ENCODE measurements at regions of chr11 and their contacts with region 1.

Region 1: GRCh38 chr11:121591405-121592033 is 138.8 kb upstream of the SORL1-AS1 start:
- DNase-seq: peak; percentile 79
- H3K4me3 ChIP-seq: no peak overlapping the region
- H3K27ac ChIP-seq: no peak overlapping the region
- H3K4me1 ChIP-seq: peaks cover 4% of the 10 kb centered on the region
- H3K27me3 ChIP-seq: peaks cover 12 to 15% of the 10 kb centered on the region in 2 experiments
- CTCF ChIP-seq: peak; percentile 76
- POLR2A ChIP-seq: no peak

Region 2: DNA sequence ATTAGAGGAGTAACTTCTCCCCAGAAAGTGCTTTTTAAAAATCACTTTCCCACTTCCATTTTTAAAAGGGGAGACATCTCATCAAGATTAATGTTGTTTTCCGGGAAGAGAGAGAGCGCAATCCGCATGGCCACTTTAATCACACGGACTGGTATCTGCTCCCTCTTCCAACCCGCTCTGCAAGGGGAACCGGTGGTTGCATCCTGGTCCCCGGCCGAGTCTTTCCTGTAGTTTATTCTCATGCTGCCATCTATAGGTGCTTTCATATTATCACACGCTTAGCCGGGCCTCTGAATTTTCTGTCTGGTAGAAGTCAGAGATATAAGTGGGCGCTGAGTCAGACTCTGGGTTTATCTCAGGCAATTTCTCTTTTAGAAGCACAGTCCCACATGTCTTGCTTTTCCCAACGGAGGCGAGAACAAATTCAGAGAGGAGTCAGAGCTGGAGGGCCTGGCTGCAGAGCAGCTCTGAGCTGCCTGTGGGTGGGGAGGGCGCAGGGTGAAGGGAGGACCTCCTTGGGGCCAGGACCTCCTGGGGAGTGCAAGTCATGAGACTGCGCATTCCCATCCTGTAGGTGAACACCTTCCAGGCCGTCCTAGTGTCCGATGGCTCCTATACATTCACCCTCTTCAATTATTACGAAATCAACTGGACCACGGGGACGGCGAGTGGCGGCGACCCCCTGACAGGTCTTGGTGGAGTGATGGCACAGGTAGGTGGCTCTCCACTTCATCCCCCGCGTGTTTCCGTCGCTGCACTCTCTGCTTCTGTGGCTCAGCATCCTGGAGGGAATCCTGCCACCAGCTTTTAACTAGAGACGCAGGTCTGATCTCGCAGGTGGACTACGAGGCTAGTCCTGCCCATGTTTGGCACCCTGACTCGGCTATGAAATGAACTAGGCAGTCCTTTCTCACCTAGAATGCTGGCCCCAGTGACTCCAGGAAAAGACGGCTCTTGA is 478.7 kb before region 1 on chr11:
- CTCF ChIA-PET with region 1: no interaction called
- POLR2A ChIA-PET with region 1: no interaction called
- dilution Hi-C with region 1: no loop called
- intact Hi-C with region 1: loop called (anchors 5 kb)
- DNase-seq: peak; percentile 54
- H3K4me3 ChIP-seq: no peak overlapping the region
- H3K27ac ChIP-seq: no peak overlapping the region
- H3K4me1 ChIP-seq: peaks cover 8% of the 10 kb centered on the region
- H3K27me3 ChIP-seq: peaks cover 0 to 7% of the 10 kb centered on the region in 2 experiments
- CTCF ChIP-seq: peak; percentile 39 to 45
- POLR2A ChIP-seq: no peak

Region 3: DNA sequence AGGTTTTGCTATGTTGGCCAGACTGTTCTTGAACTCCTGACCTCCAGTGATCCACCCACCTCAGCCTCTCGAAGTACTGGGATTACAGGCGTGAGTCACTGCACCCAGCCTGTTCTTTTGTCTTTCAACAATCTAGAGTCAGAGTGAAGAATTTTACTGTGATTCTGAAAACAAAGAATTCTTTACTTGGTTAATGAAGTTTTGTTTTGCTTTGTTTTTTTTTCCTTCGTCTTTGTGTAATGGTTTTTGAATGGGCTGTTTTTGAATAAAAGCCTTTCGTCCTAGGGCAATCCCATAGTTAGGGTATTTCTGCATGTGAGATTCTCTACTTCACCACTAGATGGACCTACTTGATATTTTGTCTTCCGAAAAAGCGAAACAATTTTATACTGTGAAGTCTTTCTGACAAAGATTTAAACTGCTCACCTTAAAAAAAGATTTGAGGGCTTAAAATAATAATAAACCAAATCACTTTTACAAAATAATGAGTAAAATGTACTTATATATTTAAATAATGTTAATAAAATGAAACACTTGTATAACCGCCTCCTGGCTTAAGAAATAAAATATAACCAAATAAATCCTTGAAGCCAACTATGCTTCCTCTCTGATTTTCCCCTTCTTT is 342.4 kb before region 1 on chr11:
- CTCF ChIA-PET with region 1: interaction called, 33 read pairs
- POLR2A ChIA-PET with region 1: no interaction called
- dilution Hi-C with region 1: no loop called
- intact Hi-C with region 1: loop called (anchors 1 kb)
- DNase-seq: peak; percentile 54
- H3K4me3 ChIP-seq: no peak overlapping the region
- H3K27ac ChIP-seq: no peak overlapping the region
- H3K4me1 ChIP-seq: no peaks in the 10 kb centered on the region
- H3K27me3 ChIP-seq: peaks cover 0 to 2% of the 10 kb centered on the region in 2 experiments
- CTCF ChIP-seq: peak; percentile 45 to 58
- POLR2A ChIP-seq: no peak

Region 4: DNA sequence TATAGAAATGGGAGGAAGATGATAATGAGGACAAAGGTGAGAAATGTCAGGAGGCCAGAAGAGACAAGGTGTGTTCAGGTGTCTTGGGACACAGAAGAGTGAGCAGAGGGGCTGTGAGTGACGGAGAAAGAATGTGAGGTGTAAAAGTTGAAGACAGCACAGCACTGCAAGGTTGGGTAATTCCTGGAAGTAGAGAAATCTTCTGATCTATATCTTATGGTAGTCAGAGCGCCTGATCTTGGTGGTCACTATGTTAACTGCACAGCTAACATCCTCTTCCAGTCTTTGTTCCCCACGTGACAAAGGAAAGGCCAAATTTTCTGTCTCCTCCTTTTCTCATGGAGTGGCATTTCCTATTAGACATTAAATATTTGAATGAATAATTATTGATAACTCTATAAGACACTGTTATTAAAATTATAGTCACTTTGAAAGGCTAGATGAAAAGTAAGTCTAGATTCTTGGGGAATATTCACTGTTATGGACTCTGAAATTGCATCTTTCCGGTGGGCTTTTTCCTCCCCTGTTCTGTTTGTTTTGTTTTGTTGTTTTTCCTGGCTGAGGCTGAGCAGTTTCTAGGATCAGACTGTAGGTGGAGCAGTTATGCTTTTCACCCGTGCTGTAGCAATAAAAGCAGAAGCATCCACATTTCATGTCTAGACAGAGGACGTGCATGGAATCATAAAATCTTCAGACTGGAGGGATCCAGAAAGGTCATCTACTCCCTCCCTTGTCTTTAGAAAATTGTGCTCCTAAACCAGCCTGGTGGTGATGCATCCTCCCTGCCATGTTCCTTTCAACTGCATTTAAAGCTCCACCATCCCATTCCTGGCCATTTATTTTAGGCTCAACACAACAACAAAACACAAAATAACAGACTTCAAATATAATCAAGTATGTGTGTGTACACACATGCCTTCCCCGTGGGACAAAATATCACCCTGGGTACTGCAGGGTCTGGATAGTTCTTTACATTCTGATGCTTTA is 272.4 kb before region 1 on chr11:
- CTCF ChIA-PET with region 1: interaction called, 82 read pairs
- POLR2A ChIA-PET with region 1: no interaction called
- dilution Hi-C with region 1: no loop called
- intact Hi-C with region 1: loop called (anchors 1 kb)
- DNase-seq: peak; percentile 44
- H3K4me3 ChIP-seq: no peak overlapping the region
- H3K27ac ChIP-seq: no peak overlapping the region
- H3K4me1 ChIP-seq: no peaks in the 10 kb centered on the region
- H3K27me3 ChIP-seq: peaks cover 10 to 21% of the 10 kb centered on the region in 2 experiments
- CTCF ChIP-seq: peak; percentile 60
- POLR2A ChIP-seq: no peak

Region 5: DNA sequence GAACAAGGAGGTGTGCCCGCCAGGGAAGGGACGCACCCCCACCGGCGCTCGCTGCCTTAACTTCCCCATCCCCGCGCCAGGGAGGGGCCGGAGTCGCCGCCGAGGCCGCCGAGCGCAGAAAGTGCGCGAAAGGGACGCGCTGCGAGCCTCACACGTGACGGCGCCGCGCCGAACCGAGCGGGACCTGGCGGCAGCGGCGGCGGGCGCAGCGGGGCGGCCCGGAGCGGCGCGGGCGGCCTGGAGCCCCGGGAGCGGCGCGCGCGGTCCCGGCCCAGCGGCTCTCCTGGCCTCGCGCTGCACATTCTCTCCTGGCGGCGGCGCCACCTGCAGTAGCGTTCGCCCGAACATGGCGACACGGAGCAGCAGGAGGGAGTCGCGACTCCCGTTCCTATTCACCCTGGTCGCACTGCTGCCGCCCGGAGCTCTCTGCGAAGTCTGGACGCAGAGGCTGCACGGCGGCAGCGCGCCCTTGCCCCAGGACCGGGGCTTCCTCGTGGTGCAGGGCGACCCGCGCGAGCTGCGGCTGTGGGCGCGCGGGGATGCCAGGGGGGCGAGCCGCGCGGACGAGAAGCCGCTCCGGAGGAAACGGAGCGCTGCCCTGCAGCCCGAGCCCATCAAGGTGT is 139.4 kb before region 1 on chr11 and contains the start of gene SORL1:
- CTCF ChIA-PET with region 1: interaction called, 75 read pairs
- POLR2A ChIA-PET with region 1: no interaction called
- dilution Hi-C with region 1: no loop called
- intact Hi-C with region 1: loop called (anchors 1 kb)
- DNase-seq: peak; percentile 26
- H3K4me3 ChIP-seq: peak within 1 kb of the TSS in 2 of 3 experiments; percentile 1 to 38
- H3K27ac ChIP-seq: no peak within 1 kb of the TSS
- H3K4me1 ChIP-seq: no peaks in the 10 kb centered on the region
- H3K27me3 ChIP-seq: peaks cover 41 to 44% of the 10 kb centered on the region in 2 experiments
- CTCF ChIP-seq: peak; percentile 41 to 64
- POLR2A ChIP-seq: no peak
- total RNA-seq, gene SORL1: 0.16 and 0.31 TPM in 2 replicates

Region 6: DNA sequence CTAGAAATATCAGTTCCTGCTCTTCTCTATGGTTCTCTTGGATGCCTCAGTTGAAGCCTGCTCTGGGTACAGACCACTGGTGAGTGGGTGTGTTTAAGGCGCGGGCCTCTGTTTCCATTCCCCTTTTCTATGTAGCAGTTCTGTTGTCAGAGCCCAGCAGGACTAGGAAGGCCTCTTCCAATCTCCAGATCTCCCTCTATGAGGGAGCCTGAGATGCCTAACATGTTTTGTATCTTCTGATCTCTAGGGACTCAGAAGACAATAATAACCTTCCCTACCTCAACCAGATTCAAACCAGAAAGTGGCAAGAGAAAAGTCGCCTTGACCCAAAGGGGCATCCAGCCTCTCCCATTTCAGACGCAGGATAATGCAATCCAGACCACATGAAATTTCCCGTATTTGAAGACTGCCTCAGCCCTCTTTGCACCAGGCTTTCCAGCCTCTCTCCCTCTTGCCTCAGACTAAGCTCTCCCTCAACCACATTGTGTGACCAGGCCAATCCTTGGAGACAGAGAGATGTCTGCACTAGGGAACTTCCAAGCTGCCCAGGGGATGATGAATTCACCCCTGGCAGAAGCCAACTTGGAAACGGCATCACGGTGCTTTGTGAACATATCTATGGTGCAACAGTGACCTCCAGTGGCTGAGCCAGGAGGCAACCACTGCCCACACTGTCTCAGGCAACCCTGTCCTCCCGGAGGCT is 913.9 kb after region 1 on chr11:
- CTCF ChIA-PET with region 1: interaction called, 5 read pairs
- POLR2A ChIA-PET with region 1: no interaction called
- dilution Hi-C with region 1: no loop called
- intact Hi-C with region 1: loop called (anchors 2 kb)
- DNase-seq: peak; percentile 77
- H3K4me3 ChIP-seq: no peak overlapping the region
- H3K27ac ChIP-seq: no peak overlapping the region
- H3K4me1 ChIP-seq: no peaks in the 10 kb centered on the region
- H3K27me3 ChIP-seq: peaks cover 2 to 6% of the 10 kb centered on the region in 2 experiments
- CTCF ChIP-seq: peak; percentile 83 to 84
- POLR2A ChIP-seq: no peak

Measured in endothelial cell of umbilical vein (primary cell).